Activated CD4-positive, alpha-beta memory T cell treated with anti-CD3 and anti-CD28 coated beads for 36 hours (primary cell): ENCODE measurements at regions of chr17 and their contacts with region 1.

Region 1: GRCh38 chr17:37527249-37527851 is 37.7 kb downstream of the DUSP14 start:
- DNase-seq: peak; percentile 20
- H3K4me3 Mint-ChIP-seq: no peak overlapping the region
- H3K27ac Mint-ChIP-seq: no peak overlapping the region
- H3K4me1 Mint-ChIP-seq: no peaks in the 10 kb centered on the region
- H3K27me3 Mint-ChIP-seq: no peaks in the 10 kb centered on the region

Region 2: DNA sequence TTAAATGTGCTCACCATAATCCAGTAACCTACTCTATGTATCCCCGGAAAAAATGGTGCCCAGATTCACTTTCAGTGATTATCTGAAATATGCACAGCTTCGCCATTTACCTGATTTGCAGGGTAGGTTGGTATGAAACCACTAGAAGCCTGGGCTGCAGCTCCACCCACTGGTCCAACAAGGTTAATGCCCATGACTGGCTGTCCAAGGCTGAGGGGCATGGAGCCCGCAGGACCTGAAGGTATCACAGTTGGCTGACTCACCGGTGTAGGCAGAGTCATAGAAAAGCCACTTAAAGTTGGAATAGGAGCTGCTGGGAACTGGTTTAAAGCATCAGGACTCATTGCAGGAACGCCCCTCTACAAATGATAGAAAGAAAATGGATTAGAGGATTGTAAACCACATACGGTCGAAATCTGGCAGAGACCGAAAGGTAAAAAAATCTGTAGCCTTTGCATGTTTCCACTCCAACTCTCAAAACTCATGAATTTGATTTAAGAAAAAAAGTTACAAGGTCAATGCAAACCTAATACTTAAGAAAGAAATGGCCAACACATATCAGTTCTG is 43.3 kb after region 1 on chr17:
- CTCF ChIA-PET with region 1: interaction called, 11 read pairs
- POLR2A ChIA-PET with region 1: no interaction called
- intact Hi-C with region 1: no loop called
- DNase-seq: peak; percentile 56
- H3K4me3 Mint-ChIP-seq: no peak overlapping the region
- H3K27ac Mint-ChIP-seq: no peak overlapping the region
- H3K4me1 Mint-ChIP-seq: no peaks in the 10 kb centered on the region
- H3K27me3 Mint-ChIP-seq: no peaks in the 10 kb centered on the region

Region 3: DNA sequence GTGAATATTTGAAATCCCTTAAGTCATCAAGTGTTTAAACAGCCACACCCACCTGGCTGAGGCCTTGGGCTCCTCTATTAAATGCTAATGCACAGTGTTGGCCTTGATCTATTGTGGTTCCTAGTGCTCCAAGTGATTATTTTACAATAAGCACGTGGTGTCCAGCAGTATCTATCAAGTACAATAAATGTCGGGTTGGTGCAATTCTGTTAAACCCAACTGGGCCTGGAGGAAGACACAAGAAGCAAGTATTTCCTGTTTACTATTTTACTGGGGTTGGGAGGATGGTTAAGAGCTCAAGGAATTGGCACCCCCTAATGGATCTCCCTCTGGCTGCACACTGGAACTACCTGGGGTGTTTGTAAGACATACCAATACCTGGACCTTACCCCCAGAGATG is 289.6 kb after region 1 on chr17:
- CTCF ChIA-PET with region 1: interaction called, 13 read pairs
- POLR2A ChIA-PET with region 1: no interaction called
- intact Hi-C with region 1: no loop called
- DNase-seq: no peak
- H3K4me3 Mint-ChIP-seq: no peak overlapping the region
- H3K27ac Mint-ChIP-seq: no peak overlapping the region
- H3K4me1 Mint-ChIP-seq: no peaks in the 10 kb centered on the region
- H3K27me3 Mint-ChIP-seq: peaks cover 21% of the 10 kb centered on the region